ENCODE measurements at regions of chr6 and their contacts with region 1.

Region 1: DNA sequence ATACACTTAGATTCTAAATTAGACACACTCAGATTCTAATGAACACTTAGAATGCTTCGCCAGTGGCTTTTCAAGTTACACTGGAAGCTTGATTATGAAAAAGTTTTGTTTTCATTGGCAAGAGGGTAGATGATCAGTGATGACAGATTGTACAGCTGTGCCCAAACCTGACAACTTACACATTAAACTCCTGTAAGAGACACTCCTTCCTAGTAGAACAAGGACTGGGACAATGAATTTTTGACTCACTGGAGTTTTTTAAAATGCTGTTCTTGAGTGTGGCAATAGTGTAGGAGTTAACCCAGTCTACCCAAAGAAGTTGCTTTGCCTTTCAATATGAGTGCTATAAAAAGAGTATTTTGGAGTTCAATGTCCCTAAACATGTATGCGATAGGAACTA is 140.8 kb downstream of the SLC16A10 start:
- DNase-seq: no peak
- ATAC-seq: peak; percentile 35 to 58
- H3K4me3 ChIP-seq: no peak overlapping the region
- H3K27ac ChIP-seq: peak overlapping the region; percentile 84 to 91 (median 88)
- H3K4me1 ChIP-seq: peaks cover 28 to 36% of the 10 kb centered on the region in 2 donors
- H3K27me3 ChIP-seq: no peaks in the 10 kb centered on the region
- CTCF ChIP-seq: no peak
- POLR2A ChIP-seq: no peak

Region 2: DNA sequence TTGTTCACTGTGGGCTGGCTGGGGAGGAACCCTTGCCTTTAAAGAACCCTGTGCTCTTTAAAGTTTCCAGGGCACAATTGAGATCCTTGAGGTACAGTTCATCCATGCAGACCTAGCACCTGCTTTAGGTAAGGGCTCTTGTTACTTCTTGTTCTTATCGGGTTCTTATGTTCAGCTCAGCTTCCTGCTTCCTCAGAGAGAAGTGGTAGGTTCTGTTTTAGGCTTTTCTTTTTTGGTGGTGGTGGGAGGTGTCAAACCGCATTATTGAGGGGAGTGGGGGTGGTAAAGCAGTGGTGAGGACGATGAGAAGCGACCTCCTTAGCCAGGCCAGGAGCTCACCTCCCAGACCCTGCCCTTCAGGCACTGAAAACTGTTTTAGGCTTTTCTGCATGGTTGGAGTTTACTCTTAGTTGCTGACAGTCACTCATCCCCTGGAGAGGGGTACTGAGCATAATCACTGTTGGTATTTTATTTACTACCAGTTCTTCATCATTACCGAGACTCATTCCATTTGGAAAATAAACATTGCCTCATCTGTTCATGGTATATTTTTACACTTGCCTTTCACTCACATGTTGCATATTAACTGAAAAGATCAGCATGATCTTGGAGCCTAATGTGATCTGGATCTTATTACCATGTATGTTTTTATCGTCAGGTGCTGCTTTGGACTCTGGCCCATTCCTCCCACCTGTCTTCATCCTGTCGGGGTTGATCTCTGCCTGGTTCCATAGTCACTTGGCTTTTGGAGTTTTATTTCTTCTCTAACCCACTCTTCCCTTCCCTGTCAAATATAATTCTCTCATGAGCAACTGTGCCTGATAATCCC is 105.4 kb before region 1 on chr6:
- in situ Hi-C with region 1: no loop called
- intact Hi-C with region 1: loop called (anchors 5 kb)
- DNase-seq: peak; percentile 75 to 80
- ATAC-seq: peak; percentile 79 to 82
- H3K4me3 ChIP-seq: peak overlapping the region; percentile 21 to 48 (median 40)
- H3K27ac ChIP-seq: peak overlapping the region; percentile 88 to 98 (median 92)
- H3K4me1 ChIP-seq: peaks cover 36 to 60% of the 10 kb centered on the region in 2 donors
- H3K27me3 ChIP-seq: no peaks in the 10 kb centered on the region
- CTCF ChIP-seq: no peak
- POLR2A ChIP-seq: peak; percentile 29 to 38

Region 3: DNA sequence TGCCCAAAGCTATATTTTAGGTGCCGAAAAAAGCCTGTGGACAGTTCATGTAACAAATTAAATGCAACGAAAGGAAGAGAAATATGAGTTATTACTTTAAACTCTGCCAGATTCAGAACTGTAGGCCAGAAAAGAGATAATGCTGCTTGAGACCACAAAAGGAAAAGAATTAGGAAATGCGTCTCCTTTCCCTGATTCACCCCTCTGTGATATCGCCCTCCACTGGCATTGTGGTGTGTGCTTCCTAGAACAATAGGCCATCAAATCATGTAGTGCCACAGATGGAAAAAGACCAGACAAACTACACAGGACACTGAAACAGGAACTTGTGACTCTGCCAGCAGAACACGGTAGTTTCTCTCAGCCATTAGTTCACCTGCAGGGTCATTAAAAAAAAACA is 1041.0 kb after region 1 on chr6:
- in situ Hi-C with region 1: no loop called
- intact Hi-C with region 1: no loop called
- DNase-seq: no peak
- ATAC-seq: peak in 1 of 2 donors; percentile 46
- H3K4me3 ChIP-seq: no peak overlapping the region
- H3K27ac ChIP-seq: peak overlapping the region; percentile 45 to 63 (median 52)
- H3K4me1 ChIP-seq: peaks cover 0 to 14% of the 10 kb centered on the region in 2 donors
- H3K27me3 ChIP-seq: no peaks in the 10 kb centered on the region
- CTCF ChIP-seq: peak in 1 of 5 experiments; percentile 24
- POLR2A ChIP-seq: no peak